HEK293 (cell line): ENCODE measurements at regions of chr22 and their contacts with region 1.

Region 1: GRCh38 chr22:37260901-37261336 is 16.9 kb upstream of the RAC2 start:
- H3K4me3 ChIP-seq: no peak overlapping the region
- H3K27ac ChIP-seq: no peak overlapping the region
- H3K4me1 ChIP-seq: no peaks in the 10 kb centered on the region
- CTCF ChIP-seq: peak; percentile 62

Region 2: GRCh38 chr22:37166675-37167066 is 94.2 kb before region 1 on chr22:
- CTCF ChIA-PET with region 1: interaction called, 27 read pairs
- POLR2A ChIA-PET with region 1: no interaction called
- H3K4me3 ChIP-seq: no peak overlapping the region
- H3K27ac ChIP-seq: no peak overlapping the region
- H3K4me1 ChIP-seq: no peaks in the 10 kb centered on the region
- CTCF ChIP-seq: peak; percentile 93

Region 3: GRCh38 chr22:37207048-37207821 is 53.7 kb before region 1 on chr22:
- CTCF ChIA-PET with region 1: interaction called, 11 read pairs
- POLR2A ChIA-PET with region 1: no interaction called
- H3K4me3 ChIP-seq: no peak overlapping the region
- H3K27ac ChIP-seq: no peak overlapping the region
- H3K4me1 ChIP-seq: no peaks in the 10 kb centered on the region
- CTCF ChIP-seq: no peak

Region 4: DNA sequence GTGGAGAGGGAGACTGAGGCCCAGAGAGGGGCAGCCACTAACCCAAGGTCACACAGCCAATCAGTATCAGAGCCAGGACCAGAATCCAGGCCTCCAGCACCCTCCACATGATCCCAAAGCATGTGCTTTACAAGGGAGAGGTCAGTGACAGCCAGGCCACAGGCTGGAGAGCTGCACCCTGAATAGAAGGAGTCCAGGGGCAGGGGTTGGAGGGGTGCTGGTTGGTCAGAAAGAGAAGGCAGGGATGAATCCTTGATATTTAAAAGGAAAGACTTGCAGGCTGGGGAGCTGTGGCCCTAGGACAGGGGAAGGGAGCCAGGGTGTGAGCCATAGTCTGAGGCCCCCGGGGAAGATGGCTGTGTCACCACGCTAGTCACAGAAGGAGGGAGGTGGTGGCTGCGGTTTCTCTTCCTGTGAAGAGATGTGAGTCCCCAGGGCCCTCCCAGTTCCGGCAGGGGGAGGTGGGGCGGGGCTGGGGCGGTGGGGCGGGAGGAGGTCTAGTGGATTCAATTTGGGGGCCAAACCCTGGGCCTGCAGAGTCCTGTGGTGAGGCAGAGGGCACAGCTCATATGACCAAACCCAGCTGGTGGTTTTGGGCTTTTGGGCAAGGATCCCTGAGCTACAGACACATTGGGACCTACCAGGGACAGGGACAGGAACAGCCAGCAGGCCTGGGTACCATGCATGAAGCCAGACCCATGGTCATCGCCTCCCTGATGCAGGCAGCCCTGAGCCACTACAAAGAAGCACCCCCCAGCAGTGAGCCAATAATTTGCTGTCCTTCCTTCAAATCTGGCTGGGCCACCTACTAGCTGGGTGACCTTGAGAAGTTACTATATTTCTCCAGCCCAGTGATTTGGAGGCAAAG is 30.9 kb before region 1 on chr22:
- CTCF ChIA-PET with region 1: interaction called, 37 read pairs
- POLR2A ChIA-PET with region 1: interaction called, 3 read pairs
- H3K4me3 ChIP-seq: no peak overlapping the region
- H3K27ac ChIP-seq: no peak overlapping the region
- H3K4me1 ChIP-seq: no peaks in the 10 kb centered on the region
- CTCF ChIP-seq: no peak

Region 5: DNA sequence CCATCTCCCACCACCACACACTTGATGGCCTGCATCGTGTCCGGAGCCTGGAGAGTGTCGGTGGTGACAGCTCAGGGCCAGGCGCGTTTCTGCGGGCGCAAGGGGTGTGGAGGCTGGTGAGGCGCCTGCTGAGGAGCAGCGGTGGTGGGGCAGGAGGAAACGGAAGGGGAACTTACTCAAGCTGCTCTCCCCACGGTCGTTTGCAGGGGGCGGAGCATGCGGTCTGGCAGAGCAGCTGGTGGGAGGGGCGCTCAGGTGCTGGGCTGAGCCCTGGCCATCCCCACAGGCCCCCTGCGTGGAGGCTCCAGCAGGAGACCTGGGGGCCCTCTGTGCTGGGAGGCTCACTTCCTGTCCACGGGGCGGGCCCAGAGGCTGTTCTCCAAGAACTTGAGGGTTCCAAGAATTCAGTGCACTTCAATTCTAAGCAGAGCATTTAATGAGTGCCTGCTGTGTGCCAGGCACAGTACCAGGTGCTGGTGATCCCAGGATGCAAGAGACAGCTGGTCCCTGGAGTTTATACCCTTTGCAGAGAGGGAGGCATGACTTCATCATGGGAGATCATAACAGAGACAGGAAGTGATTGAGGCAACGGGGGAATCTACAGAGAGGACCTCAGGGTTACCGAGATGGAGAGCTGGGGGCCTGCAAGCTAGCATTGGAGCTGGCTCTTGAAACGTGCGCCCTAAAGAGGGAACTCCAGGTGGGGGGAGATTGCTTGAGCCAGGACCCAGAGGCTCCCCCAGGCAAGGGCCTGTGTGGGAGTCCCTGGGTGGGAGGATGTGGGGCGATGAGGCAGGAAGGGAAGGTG is 16.6 kb before region 1 on chr22 and contains the start of gene RAC2:
- CTCF ChIA-PET with region 1: interaction called, 68 read pairs
- POLR2A ChIA-PET with region 1: no interaction called
- H3K4me3 ChIP-seq: no peak within 1 kb of the TSS
- H3K27ac ChIP-seq: no peak within 1 kb of the TSS
- H3K4me1 ChIP-seq: no peaks in the 10 kb centered on the region
- CTCF ChIP-seq: no peak

Region 6: DNA sequence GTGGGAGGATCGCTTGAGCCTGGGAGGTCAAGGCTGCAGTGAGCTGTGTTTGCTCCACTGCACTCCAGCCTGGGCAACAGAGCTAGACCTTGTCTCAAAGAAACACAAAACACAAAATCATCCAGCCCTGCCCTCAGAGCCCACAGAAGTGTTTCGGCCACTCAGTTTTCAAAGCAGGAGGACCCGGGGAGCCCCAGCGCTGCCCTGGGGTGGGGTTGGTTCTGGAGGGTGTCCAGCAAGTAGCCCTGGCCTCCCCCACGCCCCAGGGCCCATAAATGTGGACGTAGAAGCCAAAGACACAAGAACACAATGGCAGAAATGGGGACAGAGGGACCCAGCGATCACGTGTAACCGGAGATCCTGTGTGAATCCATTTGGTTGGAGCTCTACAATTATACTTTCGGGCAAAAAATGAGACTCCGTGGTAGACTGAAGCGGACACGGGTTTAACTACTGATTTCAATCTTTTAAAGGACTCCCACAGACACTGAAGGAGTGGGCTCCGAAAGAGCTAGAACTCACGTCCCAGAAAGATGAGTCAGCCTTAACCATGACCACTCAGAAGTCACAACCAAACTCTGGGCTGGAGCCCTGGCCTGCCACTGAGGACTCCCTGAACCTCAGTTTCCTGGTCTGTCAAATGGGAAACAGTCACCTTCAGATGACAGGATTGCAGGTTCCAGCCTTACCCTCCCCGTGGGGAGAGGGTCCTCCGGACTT is 12.4 kb after region 1 on chr22:
- CTCF ChIA-PET with region 1: interaction called, 63 read pairs
- POLR2A ChIA-PET with region 1: no interaction called
- H3K4me3 ChIP-seq: no peak overlapping the region
- H3K27ac ChIP-seq: no peak overlapping the region
- H3K4me1 ChIP-seq: no peaks in the 10 kb centered on the region
- CTCF ChIP-seq: no peak